CD8-positive, alpha-beta memory T cell (primary cell): ENCODE measurements at regions of chr5 and their contacts with region 1.

Region 1: GRCh38 chr5:151164686-151165392 is 7.3 kb upstream of the ANXA6 start:
- DNase-seq: peak; percentile 59 to 85 (median 70)
- H3K4me3 ChIP-seq: no peak overlapping the region
- H3K4me3 Mint-ChIP-seq: peak overlapping the region in 1 of 7 donors; percentile 49
- H3K27ac ChIP-seq: no peak overlapping the region
- H3K27ac Mint-ChIP-seq: peak overlapping the region in 5 of 8 donors; percentile 10 to 89 (median 42)
- H3K4me1 ChIP-seq: peaks cover 9% of the 10 kb centered on the region
- H3K4me1 Mint-ChIP-seq: peaks cover 13 to 20% (median 14%) of the 10 kb centered on the region in 3 donors
- H3K27me3 ChIP-seq: no peaks in the 10 kb centered on the region
- H3K27me3 Mint-ChIP-seq: peaks cover 0 to 2% of the 10 kb centered on the region in 2 donors

Region 2: DNA sequence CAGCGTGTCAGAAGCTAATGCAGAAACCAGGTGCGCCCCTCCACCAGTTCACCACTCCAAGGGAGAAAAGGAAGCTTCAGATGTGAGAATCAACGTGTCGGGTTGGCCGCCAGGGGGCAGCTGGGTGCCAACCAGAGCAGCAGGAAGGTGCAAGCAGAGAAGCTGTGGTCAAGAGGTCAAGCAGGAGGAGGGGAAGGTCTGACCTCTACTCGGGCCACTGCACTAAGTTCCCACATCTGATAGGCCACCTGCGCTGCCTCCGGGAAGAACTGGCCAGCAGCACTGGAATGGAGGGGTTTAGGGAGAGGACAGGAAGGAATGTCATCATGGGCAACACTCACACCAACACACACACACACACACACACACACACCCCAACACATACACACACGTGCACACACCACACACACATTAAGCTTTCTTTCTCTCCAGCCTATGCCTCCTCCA is 38.6 kb before region 1 on chr5:
- CTCF ChIA-PET with region 1: interaction called, 308 read pairs
- POLR2A ChIA-PET with region 1: interaction called, 28 read pairs
- DNase-seq: peak; percentile 52 to 75 (median 57)
- H3K4me3 ChIP-seq: no peak overlapping the region
- H3K4me3 Mint-ChIP-seq: peak overlapping the region in 1 of 7 donors; percentile 2
- H3K27ac ChIP-seq: no peak overlapping the region
- H3K27ac Mint-ChIP-seq: peak overlapping the region; percentile 10 to 95 (median 76)
- H3K4me1 ChIP-seq: peaks cover 15% of the 10 kb centered on the region
- H3K4me1 Mint-ChIP-seq: peaks cover 30 to 61% (median 51%) of the 10 kb centered on the region in 3 donors
- H3K27me3 ChIP-seq: no peaks in the 10 kb centered on the region
- H3K27me3 Mint-ChIP-seq: no peaks in the 10 kb centered on the region

Region 3: GRCh38 chr5:151150471-151151262 is 14.2 kb before region 1 on chr5:
- CTCF ChIA-PET with region 1: interaction called, 153 read pairs
- POLR2A ChIA-PET with region 1: interaction called, 4 read pairs
- DNase-seq: peak; percentile 58 to 91 (median 77)
- H3K4me3 ChIP-seq: peak overlapping the region; percentile 35
- H3K4me3 Mint-ChIP-seq: peak overlapping the region; percentile 51 to 85 (median 74)
- H3K27ac ChIP-seq: peak overlapping the region; percentile 64
- H3K27ac Mint-ChIP-seq: peak overlapping the region; percentile 92 to 99 (median 97)
- H3K4me1 ChIP-seq: peaks cover 98% of the 10 kb centered on the region
- H3K4me1 Mint-ChIP-seq: peaks cover 97 to 100% (median 99%) of the 10 kb centered on the region in 3 donors
- H3K27me3 ChIP-seq: no peaks in the 10 kb centered on the region
- H3K27me3 Mint-ChIP-seq: no peaks in the 10 kb centered on the region

Region 4: GRCh38 chr5:151183451-151184245 is 18.8 kb after region 1 on chr5:
- CTCF ChIA-PET with region 1: interaction called, 12 read pairs
- POLR2A ChIA-PET with region 1: no interaction called
- DNase-seq: no peak
- H3K4me3 ChIP-seq: no peak overlapping the region
- H3K4me3 Mint-ChIP-seq: no peak overlapping the region
- H3K27ac ChIP-seq: no peak overlapping the region
- H3K27ac Mint-ChIP-seq: peak overlapping the region in 6 of 8 donors; percentile 19 to 72 (median 44)
- H3K4me1 ChIP-seq: no peaks in the 10 kb centered on the region
- H3K4me1 Mint-ChIP-seq: peaks cover 0 to 16% (median 12%) of the 10 kb centered on the region in 3 donors
- H3K27me3 ChIP-seq: no peaks in the 10 kb centered on the region
- H3K27me3 Mint-ChIP-seq: no peaks in the 10 kb centered on the region

Region 5: DNA sequence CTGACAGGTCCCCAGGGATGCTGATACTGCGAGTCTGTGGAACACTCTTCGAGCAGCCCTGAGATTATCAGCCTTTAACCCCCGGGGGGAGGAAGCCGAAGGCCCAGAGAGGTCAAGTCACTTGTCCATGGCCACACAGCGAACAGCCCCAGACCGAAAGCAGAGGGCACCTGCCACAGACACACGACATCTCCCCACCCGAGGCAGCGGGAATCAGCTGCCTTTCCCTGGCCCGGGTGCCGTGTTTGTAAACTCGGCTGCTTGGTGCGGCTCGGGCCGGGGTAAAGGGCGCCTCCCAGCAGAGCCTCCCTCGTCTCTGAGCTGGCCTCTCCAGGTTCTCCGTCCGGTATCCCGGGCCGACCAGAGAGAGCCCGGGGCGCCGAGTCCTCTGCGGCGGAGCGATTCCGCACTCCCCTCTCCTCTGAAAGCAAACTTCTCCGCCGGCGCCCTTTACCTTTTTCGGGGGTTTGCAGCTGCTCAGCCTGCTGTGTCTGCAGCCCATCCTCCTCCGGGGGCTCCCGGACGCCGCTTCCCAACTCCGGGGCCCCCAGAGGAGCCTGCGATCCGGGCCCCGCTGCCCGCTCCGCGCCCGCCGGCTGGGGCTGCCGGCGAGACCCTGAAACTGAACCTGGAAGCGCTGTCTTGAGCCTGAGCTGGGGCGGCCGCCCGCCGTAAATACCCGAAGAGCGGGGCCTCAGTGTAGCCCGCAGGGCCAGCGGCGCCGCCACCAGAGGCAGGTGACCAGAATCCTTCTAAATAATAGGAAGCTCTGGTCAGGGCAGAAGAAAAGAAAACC is 58.8 kb after region 1 on chr5 and contains the start of gene CCDC69:
- CTCF ChIA-PET with region 1: interaction called, 25 read pairs
- POLR2A ChIA-PET with region 1: interaction called, 4 read pairs
- DNase-seq: peak; percentile 28 to 69 (median 47)
- H3K4me3 ChIP-seq: peak within 1 kb of the TSS; percentile 92
- H3K4me3 Mint-ChIP-seq: peak within 1 kb of the TSS; percentile 80 to 98 (median 89)
- H3K27ac ChIP-seq: peak within 1 kb of the TSS; percentile 86
- H3K27ac Mint-ChIP-seq: peak within 1 kb of the TSS; percentile 91 to 99 (median 96)
- H3K4me1 ChIP-seq: peaks cover 63% of the 10 kb centered on the region
- H3K4me1 Mint-ChIP-seq: peaks cover 55 to 61% (median 59%) of the 10 kb centered on the region in 3 donors
- H3K27me3 ChIP-seq: no peaks in the 10 kb centered on the region
- H3K27me3 Mint-ChIP-seq: no peaks in the 10 kb centered on the region
- total RNA-seq, gene CCDC69: 47.9 to 50.5 TPM

Region 6: GRCh38 chr5:151252762-151253604 is 88.1 kb after region 1 on chr5 and contains the start of gene GM2A:
- CTCF ChIA-PET with region 1: interaction called, 10 read pairs
- POLR2A ChIA-PET with region 1: interaction called, 3 read pairs
- DNase-seq: peak; percentile 97 to 98 (median 97)
- H3K4me3 ChIP-seq: peak within 1 kb of the TSS; percentile 97
- H3K4me3 Mint-ChIP-seq: peak within 1 kb of the TSS; percentile 87 to 97 (median 91)
- H3K27ac ChIP-seq: peak within 1 kb of the TSS; percentile 66
- H3K27ac Mint-ChIP-seq: peak within 1 kb of the TSS; percentile 72 to 94 (median 93)
- H3K4me1 ChIP-seq: peaks cover 30% of the 10 kb centered on the region
- H3K4me1 Mint-ChIP-seq: peaks cover 33 to 57% (median 36%) of the 10 kb centered on the region in 3 donors
- H3K27me3 ChIP-seq: no peaks in the 10 kb centered on the region
- H3K27me3 Mint-ChIP-seq: no peaks in the 10 kb centered on the region
- total RNA-seq, gene GM2A: 12.7 to 14.9 TPM